ENCODE measurements at regions of chr12 and their contacts with region 1.

Region 1: DNA sequence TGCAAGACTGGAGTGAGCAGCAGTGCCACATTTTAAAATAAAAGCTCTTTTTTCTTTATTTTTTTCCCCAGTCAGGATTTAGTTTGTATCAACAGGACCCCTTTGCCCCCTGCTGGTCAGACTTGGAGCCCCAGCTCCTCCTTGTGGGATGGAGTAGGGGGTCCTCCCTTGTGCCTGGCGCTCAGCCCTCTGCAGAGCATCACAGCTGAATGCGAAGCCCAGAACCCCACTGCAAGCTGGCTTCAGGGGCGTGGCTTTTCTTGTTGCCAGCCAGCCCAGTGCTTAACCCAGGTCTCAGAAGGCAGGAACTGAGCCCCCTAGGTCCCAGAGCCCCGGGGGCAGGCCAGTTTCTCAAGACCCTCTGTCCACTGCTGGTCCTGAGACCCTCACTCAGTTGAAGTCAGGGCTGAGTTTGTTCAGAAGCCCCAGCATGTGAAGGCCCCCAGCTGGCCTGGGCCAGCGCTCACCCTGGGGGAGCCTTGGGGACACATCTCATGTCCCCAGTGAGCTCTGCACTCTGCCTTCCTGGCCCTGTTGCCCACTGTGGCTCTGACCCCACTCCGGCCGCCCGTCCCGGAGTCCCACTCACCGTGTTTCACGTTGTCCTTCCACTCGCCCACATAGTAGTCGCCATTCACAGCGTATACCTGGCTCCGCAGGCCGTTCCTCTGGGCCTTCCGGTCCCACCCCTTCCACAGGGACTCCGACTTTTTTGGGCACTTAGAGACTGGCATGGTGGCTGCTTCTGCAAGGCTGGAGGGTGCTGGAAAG is 519 bp downstream of the MORN3 start:
- DNase-seq: peak in 1 of 5 donors; percentile 32
- ATAC-seq: no peak
- H3K4me3 ChIP-seq: no peak overlapping the region
- H3K27ac ChIP-seq: no peak overlapping the region
- H3K4me1 ChIP-seq: peaks cover 0 to 18% (median 8%) of the 10 kb centered on the region in 12 donors
- H3K27me3 ChIP-seq: no peaks in the 10 kb centered on the region
- CTCF ChIP-seq: peak; percentile 43 to 73 (median 56)
- POLR2A ChIP-seq: no peak

Region 2: DNA sequence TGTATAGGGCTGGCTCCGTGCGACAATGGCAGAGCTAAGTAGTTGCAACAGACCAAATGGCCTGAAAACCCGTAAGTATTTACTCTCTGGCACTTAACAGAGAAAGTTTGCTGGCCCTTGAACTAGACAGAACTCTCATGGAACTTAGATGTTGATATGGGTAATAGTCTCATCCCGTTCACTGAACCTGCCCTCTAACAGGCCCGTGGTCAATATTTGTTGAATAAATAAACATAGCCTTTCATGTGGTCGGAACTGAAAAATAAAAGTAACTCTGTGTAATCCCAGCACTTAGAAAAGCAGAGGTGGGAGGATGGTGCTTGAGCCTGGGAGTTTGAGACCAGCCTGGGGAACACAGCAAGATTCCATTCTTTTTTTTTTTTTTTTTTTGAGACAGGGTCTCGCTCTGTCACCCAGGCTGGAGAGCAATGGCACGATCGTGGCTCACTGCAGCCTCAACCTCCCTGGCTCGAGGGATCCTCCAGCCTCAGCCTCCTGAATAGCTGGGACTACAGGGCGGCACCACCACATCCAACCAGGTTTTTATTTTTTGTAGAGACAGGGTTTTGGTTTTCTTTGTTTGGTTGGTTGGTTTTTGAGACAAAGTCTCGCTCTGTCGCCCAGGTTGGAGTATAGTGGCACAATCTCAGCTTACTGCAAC is 117.8 kb before region 1 on chr12:
- intact Hi-C with region 1: loop called in 8 of 10 experiments (anchors 2 to 5 kb)
- DNase-seq: no peak
- ATAC-seq: no peak
- H3K4me3 ChIP-seq: no peak overlapping the region
- H3K27ac ChIP-seq: no peak overlapping the region
- H3K4me1 ChIP-seq: peaks cover 0 to 15% (median 0%) of the 10 kb centered on the region in 12 donors
- H3K27me3 ChIP-seq: no peaks in the 10 kb centered on the region
- CTCF ChIP-seq: no peak
- POLR2A ChIP-seq: no peak

Region 3: DNA sequence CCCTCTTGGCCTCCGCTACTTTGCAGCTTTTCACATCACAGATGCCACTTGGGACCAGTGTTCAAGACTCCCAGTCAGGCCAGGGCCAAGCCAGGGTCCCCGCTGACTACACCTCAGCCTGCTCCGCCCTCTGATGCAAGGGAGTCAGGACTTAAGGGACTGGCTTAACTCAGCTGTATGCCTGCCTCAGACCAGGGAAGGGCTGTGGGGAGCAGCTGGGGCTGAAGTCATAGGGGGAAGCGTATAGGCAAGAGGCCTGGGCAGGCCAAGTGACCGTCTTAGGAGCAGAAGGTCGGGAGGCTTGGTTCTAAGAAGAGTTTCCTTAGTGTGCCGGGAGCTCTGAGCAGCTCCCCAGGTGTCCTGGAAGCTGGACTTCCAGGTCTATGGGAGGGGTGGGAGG is 110.0 kb before region 1 on chr12:
- intact Hi-C with region 1: loop called in 7 of 10 experiments (anchors 5 kb)
- DNase-seq: no peak
- ATAC-seq: peak in 1 of 4 donors; percentile 45
- H3K4me3 ChIP-seq: no peak overlapping the region
- H3K27ac ChIP-seq: no peak overlapping the region
- H3K4me1 ChIP-seq: peaks cover 0 to 14% (median 0%) of the 10 kb centered on the region in 12 donors
- H3K27me3 ChIP-seq: no peaks in the 10 kb centered on the region
- CTCF ChIP-seq: no peak
- POLR2A ChIP-seq: no peak

Region 4: GRCh38 chr12:121632069-121632970 is 36.6 kb before region 1 on chr12:
- intact Hi-C with region 1: loop called in 7 of 10 experiments (anchors 5 to 10 kb)
- DNase-seq: no peak
- ATAC-seq: peak in 1 of 4 donors; percentile 11
- H3K4me3 ChIP-seq: no peak overlapping the region
- H3K27ac ChIP-seq: no peak overlapping the region
- H3K4me1 ChIP-seq: peaks cover 0 to 68% (median 21%) of the 10 kb centered on the region in 12 donors
- H3K27me3 ChIP-seq: no peaks in the 10 kb centered on the region
- CTCF ChIP-seq: no peak
- POLR2A ChIP-seq: no peak